Activated CD8-positive, alpha-beta T cell treated with anti-CD3 and anti-CD28 coated beads, Interleukin-2, amount 10 ng/mL, durations not matched to agents 7 days and 5 days (primary cell): ENCODE measurements at regions of chr3 and their contacts with region 1.

Region 1: GRCh38 chr3:72665701-72666443 is 182.4 kb downstream of the SHQ1 start:
- DNase-seq: peak; percentile 67
- ATAC-seq: peak; percentile 53
- H3K4me3 Mint-ChIP-seq: no peak overlapping the region
- H3K27ac Mint-ChIP-seq: no peak overlapping the region
- H3K4me1 Mint-ChIP-seq: no peaks in the 10 kb centered on the region
- H3K27me3 Mint-ChIP-seq: no peaks in the 10 kb centered on the region

Region 2: GRCh38 chr3:72690629-72691028 is 24.8 kb after region 1 on chr3:
- CTCF ChIA-PET with region 1: interaction called, 12 read pairs
- POLR2A ChIA-PET with region 1: interaction called, 3 read pairs
- DNase-seq: no peak
- ATAC-seq: no peak
- H3K4me3 Mint-ChIP-seq: no peak overlapping the region
- H3K27ac Mint-ChIP-seq: no peak overlapping the region
- H3K4me1 Mint-ChIP-seq: no peaks in the 10 kb centered on the region
- H3K27me3 Mint-ChIP-seq: no peaks in the 10 kb centered on the region

Region 3: GRCh38 chr3:72811551-72811950 is 145.7 kb after region 1 on chr3:
- CTCF ChIA-PET with region 1: interaction called, 22 read pairs
- POLR2A ChIA-PET with region 1: interaction called, 4 read pairs
- DNase-seq: no peak
- ATAC-seq: no peak
- H3K4me3 Mint-ChIP-seq: no peak overlapping the region
- H3K27ac Mint-ChIP-seq: no peak overlapping the region
- H3K4me1 Mint-ChIP-seq: peaks cover 3% of the 10 kb centered on the region
- H3K27me3 Mint-ChIP-seq: no peaks in the 10 kb centered on the region